CD4-positive, alpha-beta T cell (primary cell): ENCODE measurements at regions of chr6 and their contacts with region 1.

Region 1: DNA sequence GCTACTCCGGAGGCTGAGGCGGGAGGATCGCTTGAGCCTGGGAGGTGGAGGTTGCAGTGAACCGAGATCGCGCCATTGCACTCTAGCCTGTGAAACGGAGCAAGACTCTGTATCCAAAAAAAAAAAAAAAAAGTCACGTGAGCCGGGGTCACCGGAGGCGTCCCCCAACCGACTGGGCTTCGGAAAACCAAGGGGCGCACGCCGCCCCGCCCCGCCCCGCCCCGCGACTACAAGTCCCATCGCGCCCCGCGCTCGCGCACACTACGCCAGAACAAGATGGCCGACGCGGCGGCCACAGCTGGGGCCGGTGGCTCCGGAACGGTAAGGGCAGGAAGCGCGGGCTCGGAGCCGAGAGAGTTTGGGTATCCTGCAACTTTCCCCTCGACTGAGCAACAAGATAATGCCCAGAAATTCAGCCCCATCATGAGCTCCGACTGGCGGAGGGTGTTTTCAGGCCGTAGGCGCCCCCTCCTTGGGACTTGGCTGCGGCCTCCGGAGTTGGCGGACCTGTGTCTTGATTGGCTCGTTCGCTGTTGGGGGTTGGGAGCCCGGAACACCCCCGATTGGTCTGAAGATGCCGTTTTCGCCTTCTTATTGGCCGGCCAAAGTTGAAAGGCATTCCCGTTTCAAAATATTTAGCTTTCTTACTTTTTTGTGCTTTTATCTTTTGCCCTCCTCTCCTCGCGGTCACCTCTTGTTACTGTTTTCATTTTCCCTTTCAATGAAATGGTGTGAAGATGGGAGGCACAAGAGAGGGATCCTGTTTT is at the start of gene TAF8:
- DNase-seq: peak; percentile 78 to 95 (median 84)
- ATAC-seq: peak; percentile 53
- H3K4me3 ChIP-seq: peak within 1 kb of the TSS; percentile 85
- H3K4me3 Mint-ChIP-seq: peak within 1 kb of the TSS; percentile 96
- H3K27ac ChIP-seq: peak within 1 kb of the TSS; percentile 85 to 89
- H3K27ac Mint-ChIP-seq: peak within 1 kb of the TSS; percentile 89
- H3K4me1 ChIP-seq: peaks cover 61% of the 10 kb centered on the region
- H3K4me1 Mint-ChIP-seq: peaks cover 72% of the 10 kb centered on the region
- H3K27me3 ChIP-seq: no peaks in the 10 kb centered on the region
- H3K27me3 Mint-ChIP-seq: no peaks in the 10 kb centered on the region
- CTCF ChIP-seq: no peak
- total RNA-seq, gene TAF8: 30.1 to 34.7 TPM

Region 2: DNA sequence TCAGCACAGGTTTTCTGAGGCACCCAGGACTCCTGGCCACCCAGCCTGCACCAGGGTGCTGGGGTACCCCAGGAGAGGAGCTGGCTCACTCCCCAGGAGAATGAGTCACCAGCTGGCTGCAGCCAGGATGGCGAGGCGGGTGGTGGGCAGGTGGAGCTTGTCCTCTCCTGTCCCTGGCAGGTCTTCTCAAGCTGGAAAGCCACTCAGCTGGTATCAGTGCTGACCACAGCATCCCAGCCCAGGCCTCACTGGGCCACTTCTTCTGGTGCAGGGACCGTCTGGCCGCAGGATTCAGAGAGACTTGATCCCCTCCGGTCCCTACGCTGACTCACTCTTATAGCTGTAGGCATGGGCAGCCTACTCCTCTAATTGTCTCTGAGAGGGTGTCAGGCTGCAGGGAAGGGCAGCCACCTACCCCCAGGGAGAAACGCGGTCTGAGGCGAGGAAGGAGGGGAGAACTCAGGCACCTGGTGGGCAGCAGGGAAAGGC is 337.2 kb before region 1 on chr6:
- CTCF ChIA-PET with region 1: no interaction called
- POLR2A ChIA-PET with region 1: no interaction called
- intact Hi-C with region 1: no loop called
- DNase-seq: no peak
- ATAC-seq: no peak
- H3K4me3 ChIP-seq: no peak overlapping the region
- H3K4me3 Mint-ChIP-seq: no peak overlapping the region
- H3K27ac ChIP-seq: no peak overlapping the region
- H3K27ac Mint-ChIP-seq: no peak overlapping the region
- H3K4me1 ChIP-seq: peaks cover 11% of the 10 kb centered on the region
- H3K4me1 Mint-ChIP-seq: peaks cover 28% of the 10 kb centered on the region
- H3K27me3 ChIP-seq: no peaks in the 10 kb centered on the region
- H3K27me3 Mint-ChIP-seq: no peaks in the 10 kb centered on the region
- CTCF ChIP-seq: no peak

Region 3: GRCh38 chr6:41957117-41957516 is 93.3 kb before region 1 on chr6:
- CTCF ChIA-PET with region 1: no interaction called
- POLR2A ChIA-PET with region 1: no interaction called
- intact Hi-C with region 1: no loop called
- DNase-seq: no peak
- ATAC-seq: no peak
- H3K4me3 ChIP-seq: no peak overlapping the region
- H3K4me3 Mint-ChIP-seq: peak overlapping the region; percentile 9
- H3K27ac ChIP-seq: no peak overlapping the region
- H3K27ac Mint-ChIP-seq: peak overlapping the region; percentile 76
- H3K4me1 ChIP-seq: peaks cover 41% of the 10 kb centered on the region
- H3K4me1 Mint-ChIP-seq: peaks cover 74% of the 10 kb centered on the region
- H3K27me3 ChIP-seq: no peaks in the 10 kb centered on the region
- H3K27me3 Mint-ChIP-seq: no peaks in the 10 kb centered on the region
- CTCF ChIP-seq: no peak

Region 4: DNA sequence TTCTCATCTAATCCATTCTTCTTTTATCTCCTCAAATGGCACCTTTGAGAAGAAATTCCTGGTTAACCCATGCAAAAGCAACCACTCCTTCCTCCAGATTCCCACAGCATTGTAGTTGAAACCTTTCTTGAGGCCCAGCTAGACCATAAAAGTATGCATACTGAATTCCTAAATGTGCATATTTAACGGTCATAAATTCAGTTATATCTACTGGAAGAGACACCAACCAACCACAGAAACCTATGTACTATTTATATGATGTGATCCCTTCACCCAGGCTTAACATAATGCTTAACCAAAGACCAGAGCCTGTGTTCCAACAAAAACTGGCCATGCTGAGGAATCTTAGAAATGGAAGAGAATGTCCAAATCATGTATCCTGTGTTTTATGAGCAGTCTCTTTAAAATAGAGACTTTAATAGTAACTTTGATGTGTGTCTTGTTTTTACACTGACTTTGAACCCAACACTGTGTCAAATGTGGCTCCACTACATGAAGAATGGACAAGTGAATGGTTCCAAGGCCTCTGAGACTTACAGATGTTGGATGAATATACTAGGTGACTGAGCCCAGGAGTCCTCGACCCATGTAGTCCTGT is 11.5 kb before region 1 on chr6:
- CTCF ChIA-PET with region 1: interaction called, 10 read pairs
- POLR2A ChIA-PET with region 1: interaction called, 55 read pairs
- intact Hi-C with region 1: no loop called
- DNase-seq: no peak
- ATAC-seq: no peak
- H3K4me3 ChIP-seq: peak overlapping the region; percentile 49
- H3K4me3 Mint-ChIP-seq: peak overlapping the region; percentile 88
- H3K27ac ChIP-seq: peak overlapping the region; percentile 60 to 61
- H3K27ac Mint-ChIP-seq: peak overlapping the region; percentile 89
- H3K4me1 ChIP-seq: peaks cover 98% of the 10 kb centered on the region
- H3K4me1 Mint-ChIP-seq: peaks cover 75% of the 10 kb centered on the region
- H3K27me3 ChIP-seq: no peaks in the 10 kb centered on the region
- H3K27me3 Mint-ChIP-seq: no peaks in the 10 kb centered on the region
- CTCF ChIP-seq: no peak

Region 5: GRCh38 chr6:42066156-42066555 is 15.7 kb after region 1 on chr6:
- CTCF ChIA-PET with region 1: interaction called, 5 read pairs
- POLR2A ChIA-PET with region 1: interaction called, 14 read pairs
- intact Hi-C with region 1: no loop called
- DNase-seq: no peak
- ATAC-seq: no peak
- H3K4me3 ChIP-seq: no peak overlapping the region
- H3K4me3 Mint-ChIP-seq: no peak overlapping the region
- H3K27ac ChIP-seq: no peak overlapping the region
- H3K27ac Mint-ChIP-seq: no peak overlapping the region
- H3K4me1 ChIP-seq: no peaks in the 10 kb centered on the region
- H3K4me1 Mint-ChIP-seq: no peaks in the 10 kb centered on the region
- H3K27me3 ChIP-seq: no peaks in the 10 kb centered on the region
- H3K27me3 Mint-ChIP-seq: no peaks in the 10 kb centered on the region
- CTCF ChIP-seq: no peak

Region 6: GRCh38 chr6:42756722-42757121 is 706.3 kb after region 1 on chr6:
- CTCF ChIA-PET with region 1: no interaction called
- POLR2A ChIA-PET with region 1: no interaction called
- intact Hi-C with region 1: no loop called
- DNase-seq: no peak
- ATAC-seq: no peak
- H3K4me3 ChIP-seq: no peak overlapping the region
- H3K4me3 Mint-ChIP-seq: no peak overlapping the region
- H3K27ac ChIP-seq: no peak overlapping the region
- H3K27ac Mint-ChIP-seq: no peak overlapping the region
- H3K4me1 ChIP-seq: peaks cover 7% of the 10 kb centered on the region
- H3K4me1 Mint-ChIP-seq: peaks cover 57% of the 10 kb centered on the region
- H3K27me3 ChIP-seq: no peaks in the 10 kb centered on the region
- H3K27me3 Mint-ChIP-seq: no peaks in the 10 kb centered on the region
- CTCF ChIP-seq: no peak